Sigmoid colon (tissue), 7 donors: ENCODE measurements at regions of chr2 and their contacts with region 1.

Region 1: GRCh38 chr2:99489761-99490622 is at the start of gene REV1:
- DNase-seq: peak; percentile 95
- H3K4me3 ChIP-seq: peak within 1 kb of the TSS; percentile 61 to 99 (median 96)
- H3K27ac ChIP-seq: peak within 1 kb of the TSS; percentile 95 to 100 (median 98)
- H3K4me1 ChIP-seq: peaks cover 0 to 29% (median 21%) of the 10 kb centered on the region in 4 donors
- H3K27me3 ChIP-seq: no peaks in the 10 kb centered on the region
- CTCF ChIP-seq: peak; percentile 68 to 89 (median 70)
- EP300 ChIP-seq: no peak
- POLR2A ChIP-seq: no peak
- total RNA-seq, gene REV1: 41.7 to 73.1 (median 46.7) TPM

Region 2: GRCh38 chr2:99154643-99155536 is 335.1 kb before region 1 on chr2 and contains the starts of genes LIPT1 and TSGA10:
- intact Hi-C with region 1: loop called (anchors 10 kb)
- DNase-seq: peak; percentile 97
- H3K4me3 ChIP-seq: peak within 1 kb of the TSS; percentile 61 to 85 (median 66)
- H3K27ac ChIP-seq: peak within 1 kb of the TSS; percentile 83 to 91 (median 84)
- H3K4me1 ChIP-seq: peaks cover 0 to 19% (median 18%) of the 10 kb centered on the region in 4 donors
- H3K27me3 ChIP-seq: no peaks in the 10 kb centered on the region
- CTCF ChIP-seq: no peak
- EP300 ChIP-seq: peak in 1 of 4 donors; percentile 96
- POLR2A ChIP-seq: peak; percentile 68 to 78
- total RNA-seq, gene LIPT1: 4.8 to 9.5 (median 7.4) TPM
- total RNA-seq, gene TSGA10: 1.4 to 8.4 (median 3.8) TPM

Region 3: DNA sequence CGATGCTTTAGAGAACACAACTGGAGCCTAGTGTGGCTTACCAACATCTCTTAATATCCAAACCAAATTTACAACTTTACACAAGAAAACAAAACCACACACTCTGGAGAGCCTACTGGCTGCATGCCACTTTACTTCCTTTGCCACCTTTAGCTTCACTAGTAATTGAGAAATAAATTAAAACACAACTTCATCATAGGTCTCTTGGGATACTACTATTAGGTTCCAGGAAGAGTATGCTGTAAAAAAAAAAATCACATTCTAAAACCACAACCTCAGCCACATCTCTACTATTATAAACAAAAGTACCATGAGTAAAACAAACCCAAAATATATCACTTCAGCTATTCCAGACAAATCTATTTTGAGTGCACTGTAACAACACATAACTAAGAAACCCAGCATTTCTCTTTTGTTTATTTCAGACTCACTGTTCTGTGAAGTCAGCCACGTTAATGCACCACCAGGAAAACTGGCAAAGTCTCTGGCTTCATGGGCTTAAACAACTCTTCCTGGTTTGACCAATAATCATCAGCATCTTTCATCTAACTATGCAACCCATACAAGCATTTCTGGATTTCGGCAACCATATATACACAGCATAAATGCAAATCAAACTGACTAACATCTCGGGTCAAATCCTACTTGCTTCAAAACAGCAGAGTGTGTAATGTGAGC is 59.2 kb before region 1 on chr2:
- intact Hi-C with region 1: loop called (anchors 10 kb)
- DNase-seq: no peak
- H3K4me3 ChIP-seq: no peak overlapping the region
- H3K27ac ChIP-seq: peak overlapping the region; percentile 19 to 61 (median 54)
- H3K4me1 ChIP-seq: peaks cover 0 to 22% (median 16%) of the 10 kb centered on the region in 4 donors
- H3K27me3 ChIP-seq: no peaks in the 10 kb centered on the region
- CTCF ChIP-seq: no peak
- EP300 ChIP-seq: no peak
- POLR2A ChIP-seq: no peak

Region 4: GRCh38 chr2:99451280-99451679 is 38.7 kb before region 1 on chr2:
- intact Hi-C with region 1: loop called (anchors 5 kb)
- DNase-seq: no peak
- H3K4me3 ChIP-seq: no peak overlapping the region
- H3K27ac ChIP-seq: no peak overlapping the region
- H3K4me1 ChIP-seq: peaks cover 0 to 14% (median 0%) of the 10 kb centered on the region in 4 donors
- H3K27me3 ChIP-seq: no peaks in the 10 kb centered on the region
- CTCF ChIP-seq: no peak
- EP300 ChIP-seq: no peak
- POLR2A ChIP-seq: no peak

Region 5: DNA sequence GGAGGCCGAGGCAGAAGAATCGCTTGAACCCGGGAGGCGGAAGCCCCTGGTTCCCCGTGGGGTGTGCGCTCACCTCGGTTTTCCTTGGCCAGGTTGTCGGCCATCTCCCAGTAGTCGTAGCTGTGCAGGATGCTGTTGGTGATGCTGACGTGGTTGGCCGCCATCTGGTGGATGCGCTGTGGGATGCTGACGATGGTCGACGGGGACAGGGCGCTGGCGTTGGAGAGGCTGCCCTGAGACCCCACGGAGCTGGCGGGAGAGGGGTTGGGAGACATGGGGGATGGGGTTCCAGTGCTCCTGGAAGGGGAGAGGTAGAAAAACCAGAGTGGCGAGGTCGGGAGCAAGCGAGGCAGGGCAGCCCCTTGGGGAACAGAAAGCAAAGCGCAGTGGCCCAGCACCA is 64.2 kb after region 1 on chr2:
- intact Hi-C with region 1: no loop called
- DNase-seq: no peak
- H3K4me3 ChIP-seq: no peak overlapping the region
- H3K27ac ChIP-seq: no peak overlapping the region
- H3K4me1 ChIP-seq: no peaks in the 10 kb centered on the region
- H3K27me3 ChIP-seq: no peaks in the 10 kb centered on the region
- CTCF ChIP-seq: no peak
- EP300 ChIP-seq: no peak
- POLR2A ChIP-seq: no peak